ENCODE measurements at regions of chr13 and their contacts with region 1.

Region 1: DNA sequence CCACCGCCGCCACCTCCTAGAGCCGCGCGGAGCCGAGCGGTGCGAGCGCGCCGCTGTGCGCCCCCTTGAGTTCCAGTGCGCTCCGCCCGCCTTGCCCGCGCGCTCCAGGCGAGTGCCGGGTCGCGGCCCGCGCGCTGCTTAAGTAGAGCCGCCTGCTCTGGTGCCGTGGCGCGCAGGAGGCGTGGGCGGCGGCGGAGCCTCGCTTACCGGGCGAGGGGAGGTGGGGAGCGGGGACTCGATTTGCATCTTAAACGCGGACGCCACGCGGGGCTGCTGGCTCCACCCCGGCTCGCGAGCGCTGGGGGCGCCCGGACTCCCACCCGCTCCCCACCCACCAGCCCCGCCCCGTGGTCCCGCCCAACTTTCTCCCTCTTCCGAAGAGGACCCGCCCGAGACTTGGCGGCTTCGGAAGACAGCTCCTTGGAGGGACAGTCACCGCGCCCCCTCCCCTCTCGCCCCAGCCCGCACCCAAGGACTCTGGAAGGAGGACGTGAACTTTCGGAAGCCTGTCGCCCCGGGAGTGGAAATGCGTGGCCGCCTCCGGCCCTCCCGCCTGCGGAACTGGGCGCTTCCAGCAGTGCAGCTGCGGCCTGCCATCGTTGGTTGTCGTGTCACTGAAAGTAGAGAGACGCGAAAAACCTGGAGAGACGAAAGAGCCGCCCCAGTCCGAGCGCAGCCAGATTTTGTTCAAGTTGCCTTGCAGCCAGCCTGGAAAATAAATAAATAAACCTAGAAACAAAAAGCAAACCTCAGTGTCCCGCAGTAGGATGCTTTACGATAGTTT is at the start of gene KCTD12:
- DNase-seq: peak; percentile 74
- ATAC-seq: peak; percentile 76
- H3K4me3 Mint-ChIP-seq: peak within 1 kb of the TSS; percentile 76
- H3K27ac Mint-ChIP-seq: no peak within 1 kb of the TSS
- H3K4me1 Mint-ChIP-seq: peaks cover 19% of the 10 kb centered on the region
- H3K27me3 Mint-ChIP-seq: peaks cover 66% of the 10 kb centered on the region
- CTCF ChIP-seq: no peak; the same call in 1 of the 2 replicates
- total RNA-seq, gene KCTD12: 6.7 to 8.0 TPM (median 7.8 TPM) in 3 replicates

Region 2: GRCh38 chr13:76538004-76538403 is 348.5 kb before region 1 on chr13:
- CTCF ChIA-PET with region 1: no interaction called
- POLR2A ChIA-PET with region 1: no interaction called
- DNase-seq: no peak
- ATAC-seq: peak; percentile 74
- H3K4me3 Mint-ChIP-seq: no peak overlapping the region
- H3K27ac Mint-ChIP-seq: peak overlapping the region; percentile 54
- H3K4me1 Mint-ChIP-seq: peaks cover 7% of the 10 kb centered on the region; the same call in 1 of the 2 replicates
- H3K27me3 Mint-ChIP-seq: no peaks in the 10 kb centered on the region; the same call in 1 of the 2 replicates
- CTCF ChIP-seq: no peak

Region 3: DNA sequence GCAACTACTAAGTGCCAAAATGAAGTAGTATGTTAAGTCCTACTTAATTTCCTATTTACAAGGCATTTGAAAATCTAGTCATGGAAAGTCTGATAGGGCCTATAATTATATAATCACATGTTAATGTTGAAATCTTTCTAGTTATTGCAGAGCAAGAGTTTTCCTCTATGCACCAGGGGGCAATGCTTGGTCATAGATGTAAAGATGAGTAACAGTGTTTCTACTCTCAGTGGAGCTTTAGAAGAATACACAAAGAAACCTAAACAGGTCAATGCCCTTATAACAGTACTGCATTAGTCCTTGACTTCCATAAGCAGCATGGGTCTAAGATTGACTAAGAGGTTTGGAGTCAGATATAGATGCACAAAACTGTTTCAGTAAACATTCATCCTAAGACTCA is 218.9 kb before region 1 on chr13:
- CTCF ChIA-PET with region 1: interaction called, 21 read pairs
- POLR2A ChIA-PET with region 1: no interaction called
- DNase-seq: no peak
- ATAC-seq: no peak; the same call in 1 of the 2 replicates
- H3K4me3 Mint-ChIP-seq: no peak overlapping the region
- H3K27ac Mint-ChIP-seq: no peak overlapping the region
- H3K4me1 Mint-ChIP-seq: peaks cover 7% of the 10 kb centered on the region
- H3K27me3 Mint-ChIP-seq: no peaks in the 10 kb centered on the region
- CTCF ChIP-seq: no peak

Region 4: DNA sequence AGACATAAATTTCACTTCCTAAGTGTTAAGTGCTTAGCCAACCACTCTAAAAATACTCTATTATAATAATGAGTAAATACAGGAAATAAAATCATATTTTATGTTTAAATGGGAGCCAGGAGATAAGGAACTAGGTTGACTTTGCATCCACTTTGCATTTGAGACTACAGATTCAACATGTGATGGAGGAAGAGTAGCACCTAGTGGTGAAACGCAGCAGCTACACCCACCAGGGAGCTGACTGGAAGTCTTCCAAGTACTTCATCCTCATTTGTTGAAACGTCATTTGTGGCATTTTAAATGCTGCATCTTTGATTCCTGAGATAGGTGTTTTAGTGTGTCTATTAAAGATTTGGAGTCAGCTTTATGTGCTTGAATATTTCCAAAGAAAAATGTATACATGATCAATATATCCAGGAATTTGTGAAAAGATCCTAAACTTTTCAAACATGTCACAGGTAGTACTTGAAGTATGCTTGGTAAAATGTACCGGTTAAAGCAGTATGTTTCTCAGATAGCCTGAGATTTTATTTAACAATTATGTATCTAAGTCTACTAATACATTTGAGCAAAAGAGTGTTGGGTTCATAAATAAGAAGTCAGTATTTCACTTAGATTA is 17.2 kb after region 1 on chr13:
- CTCF ChIA-PET with region 1: interaction called, 10 read pairs
- POLR2A ChIA-PET with region 1: no interaction called
- DNase-seq: peak; percentile 78
- ATAC-seq: peak; percentile 88
- H3K4me3 Mint-ChIP-seq: no peak overlapping the region
- H3K27ac Mint-ChIP-seq: no peak overlapping the region
- H3K4me1 Mint-ChIP-seq: no peaks in the 10 kb centered on the region
- H3K27me3 Mint-ChIP-seq: no peaks in the 10 kb centered on the region; the same call in 1 of the 2 replicates
- CTCF ChIP-seq: peak; percentile 94

Measured in WTC11 (cell line).